ENCODE measurements at regions of chr21 and their contacts with region 1.

Region 1: GRCh38 chr21:17834639-17835354 is 15.6 kb upstream of the C21orf91 start:
- DNase-seq: no peak
- H3K4me3 ChIP-seq: no peak overlapping the region
- H3K27ac ChIP-seq: no peak overlapping the region
- H3K4me1 ChIP-seq: no peaks in the 10 kb centered on the region
- H3K27me3 ChIP-seq: no peaks in the 10 kb centered on the region
- CTCF ChIP-seq: no peak
- EP300 ChIP-seq: no peak
- POLR2A ChIP-seq: no peak

Region 2: DNA sequence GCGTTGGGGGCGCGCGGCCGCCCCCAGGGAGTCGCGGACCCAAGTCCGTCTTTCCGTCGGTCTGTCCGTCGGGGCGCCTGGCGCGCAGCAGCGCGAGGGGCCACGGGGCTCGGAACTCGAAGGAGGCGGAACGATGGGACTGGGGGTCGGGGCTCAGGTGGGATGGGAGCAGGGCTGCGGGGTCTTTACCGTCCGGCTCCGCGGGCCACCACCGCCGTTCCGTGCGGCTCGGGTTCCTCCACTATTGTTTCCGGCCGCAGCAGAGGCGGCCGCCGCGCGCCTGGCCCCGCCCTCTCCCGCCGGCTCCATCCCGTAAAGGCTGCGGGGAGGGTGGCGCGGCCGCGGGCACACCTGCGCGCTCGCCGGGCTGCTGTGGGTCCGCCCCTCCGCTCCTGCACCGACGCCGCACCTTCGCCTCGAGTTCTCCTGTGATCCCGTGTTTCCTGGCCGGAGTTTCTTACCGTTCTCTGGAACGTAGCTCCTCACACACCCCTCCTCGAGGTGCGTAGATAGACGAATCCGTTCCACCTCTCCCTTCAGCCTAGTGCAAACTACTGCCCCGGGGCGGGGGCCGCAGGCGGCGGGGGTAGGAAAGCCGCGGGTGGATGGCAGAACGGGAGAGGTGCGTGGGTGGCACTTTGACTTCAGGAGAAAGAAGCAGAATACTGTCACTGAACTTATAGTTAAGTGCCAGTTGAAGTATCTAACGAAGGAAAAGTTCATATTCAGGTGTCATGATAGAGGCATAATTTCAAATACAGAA is 15.5 kb before region 1 on chr21 and contains the start of gene C21orf91:
- in situ Hi-C with region 1: no loop called
- intact Hi-C with region 1: no loop called
- DNase-seq: peak; percentile 91
- H3K4me3 ChIP-seq: peak within 1 kb of the TSS; percentile 93 to 100 (median 96)
- H3K27ac ChIP-seq: peak within 1 kb of the TSS; percentile 93 to 96 (median 94)
- H3K4me1 ChIP-seq: peaks cover 0 to 24% (median 13%) of the 10 kb centered on the region in 4 donors
- H3K27me3 ChIP-seq: no peaks in the 10 kb centered on the region
- CTCF ChIP-seq: no peak
- EP300 ChIP-seq: no peak
- POLR2A ChIP-seq: peak; percentile 87
- total RNA-seq, gene C21orf91: 3.2 to 10.8 (median 5.6) TPM

Region 3: GRCh38 chr21:17903029-17903806 is 68.4 kb after region 1 on chr21:
- in situ Hi-C with region 1: no loop called
- intact Hi-C with region 1: loop called (anchors 10 kb)
- DNase-seq: no peak
- H3K4me3 ChIP-seq: no peak overlapping the region
- H3K27ac ChIP-seq: no peak overlapping the region
- H3K4me1 ChIP-seq: no peaks in the 10 kb centered on the region
- H3K27me3 ChIP-seq: no peaks in the 10 kb centered on the region
- CTCF ChIP-seq: peak in 3 of 5 experiments; percentile 25 to 33 (median 31)
- EP300 ChIP-seq: no peak
- POLR2A ChIP-seq: no peak

Region 4: GRCh38 chr21:17964716-17965115 is 129.9 kb after region 1 on chr21:
- in situ Hi-C with region 1: no loop called
- intact Hi-C with region 1: no loop called
- DNase-seq: no peak
- H3K4me3 ChIP-seq: no peak overlapping the region
- H3K27ac ChIP-seq: no peak overlapping the region
- H3K4me1 ChIP-seq: no peaks in the 10 kb centered on the region
- H3K27me3 ChIP-seq: no peaks in the 10 kb centered on the region
- CTCF ChIP-seq: no peak
- EP300 ChIP-seq: no peak
- POLR2A ChIP-seq: no peak

Measured in transverse colon (tissue), 4 donors.